SK-N-SH (cell line): ENCODE measurements at regions of chr13 and their contacts with region 1.

Region 1: GRCh38 chr13:98653463-98653985 is 76.6 kb upstream of the STK24 start:
- DNase-seq: peak; percentile 84
- H3K4me3 ChIP-seq: peak overlapping the region in 1 of 2 experiments; percentile 35; a peak in 1 of 4 replicates
- H3K27ac ChIP-seq: no peak overlapping the region
- H3K4me1 ChIP-seq: peaks cover 0 to 7% of the 10 kb centered on the region in 2 experiments; a peak in 2 of 4 replicates
- H3K27me3 ChIP-seq: no peaks in the 10 kb centered on the region
- CTCF ChIP-seq: peak; percentile 92
- EP300 ChIP-seq: 0 out of 4 replicates have a peak, but pooled peaks of 1 of the 2 experiments have one; percentile 31
- RAD21 ChIP-seq: peak; percentile 92

Region 2: DNA sequence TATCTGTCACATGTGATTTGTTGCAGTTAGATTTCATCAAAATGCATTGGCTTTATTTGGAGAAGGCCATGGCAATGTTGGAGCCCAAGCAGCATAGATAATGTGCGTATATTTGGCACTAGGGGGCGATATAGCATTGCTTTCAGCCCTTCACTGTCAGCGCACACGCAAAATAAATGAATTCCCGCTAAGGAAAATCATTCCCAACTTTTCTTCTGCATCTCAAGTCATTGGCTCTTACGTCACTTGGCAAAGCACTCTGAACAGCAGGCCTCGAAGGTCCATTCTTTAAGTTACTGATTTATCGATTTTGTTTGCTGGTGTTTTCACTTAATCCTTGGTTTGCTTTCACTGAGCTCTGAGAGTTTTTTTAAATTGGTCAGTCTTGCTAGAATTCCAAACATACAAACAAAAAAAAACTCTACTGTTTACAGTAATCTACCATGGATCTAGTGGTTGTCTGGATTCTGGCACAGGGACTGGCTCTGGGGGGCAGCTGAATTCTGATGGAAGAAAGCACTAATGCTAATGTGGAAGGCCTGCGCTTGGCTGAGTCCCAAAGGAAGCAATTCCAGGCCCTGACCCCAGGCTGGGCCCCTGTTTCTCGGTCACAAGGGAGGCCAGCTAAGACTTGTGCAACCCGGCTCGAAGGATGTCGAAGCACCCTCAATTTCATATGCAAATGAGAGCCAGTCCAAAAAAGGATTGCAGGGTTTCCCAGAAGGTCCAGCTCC is 797.8 kb before region 1 on chr13:
- CTCF ChIA-PET with region 1: interaction called, 12 read pairs
- POLR2A ChIA-PET with region 1: no interaction called
- DNase-seq: peak; percentile 62
- H3K4me3 ChIP-seq: no peak overlapping the region
- H3K27ac ChIP-seq: peak overlapping the region in 1 of 2 experiments; percentile 30; a peak in 1 of 4 replicates
- H3K4me1 ChIP-seq: peaks cover 3 to 17% of the 10 kb centered on the region in 2 experiments; a peak in 2 of 4 replicates
- H3K27me3 ChIP-seq: no peaks in the 10 kb centered on the region
- CTCF ChIP-seq: peak; percentile 92
- EP300 ChIP-seq: 0 out of 4 replicates have a peak, but pooled peaks of 1 of the 2 experiments have one; percentile 9
- RAD21 ChIP-seq: peak; percentile 98

Region 3: GRCh38 chr13:98466634-98467236 is 186.8 kb before region 1 on chr13:
- CTCF ChIA-PET with region 1: interaction called, 11 read pairs
- POLR2A ChIA-PET with region 1: no interaction called
- DNase-seq: peak; percentile 68
- H3K4me3 ChIP-seq: peak overlapping the region in 1 of 2 experiments; percentile 28; a peak in 1 of 4 replicates
- H3K27ac ChIP-seq: no peak overlapping the region
- H3K4me1 ChIP-seq: peaks cover 0 to 19% of the 10 kb centered on the region in 2 experiments; a peak in 1 of 4 replicates
- H3K27me3 ChIP-seq: no peaks in the 10 kb centered on the region
- CTCF ChIP-seq: peak; percentile 75
- EP300 ChIP-seq: no peak
- RAD21 ChIP-seq: peak; percentile 50

Region 4: DNA sequence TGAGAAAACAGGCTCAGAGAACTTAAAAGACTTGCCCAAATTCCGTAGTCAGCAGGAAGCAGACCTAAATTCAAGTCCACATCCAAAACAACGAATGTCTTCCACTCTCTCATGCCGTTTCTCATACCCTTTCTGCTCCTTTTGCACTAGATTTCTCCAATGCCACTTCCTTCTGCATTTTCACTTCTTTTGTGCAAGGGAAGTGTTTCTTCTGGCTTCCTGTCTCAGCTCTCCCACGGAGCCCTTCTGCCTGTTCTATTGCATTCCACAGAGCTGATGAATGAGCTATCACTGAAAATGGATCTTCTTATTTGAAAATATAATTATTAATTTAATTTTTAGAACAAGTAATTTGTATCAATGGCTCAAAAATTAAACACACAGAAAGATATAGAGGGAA is 20.6 kb before region 1 on chr13:
- CTCF ChIA-PET with region 1: interaction called, 19 read pairs
- POLR2A ChIA-PET with region 1: no interaction called
- DNase-seq: no peak
- H3K4me3 ChIP-seq: no peak overlapping the region
- H3K27ac ChIP-seq: no peak overlapping the region
- H3K4me1 ChIP-seq: no peaks in the 10 kb centered on the region
- H3K27me3 ChIP-seq: no peaks in the 10 kb centered on the region
- CTCF ChIP-seq: no peak
- EP300 ChIP-seq: no peak
- RAD21 ChIP-seq: no peak

Region 5: GRCh38 chr13:98672944-98673545 is 19.5 kb after region 1 on chr13:
- CTCF ChIA-PET with region 1: interaction called, 18 read pairs
- POLR2A ChIA-PET with region 1: no interaction called
- DNase-seq: peak; percentile 77
- H3K4me3 ChIP-seq: peak overlapping the region in 1 of 2 experiments; percentile 22; a peak in 1 of 4 replicates
- H3K27ac ChIP-seq: no peak overlapping the region
- H3K4me1 ChIP-seq: peaks cover 0 to 8% of the 10 kb centered on the region in 2 experiments; a peak in 1 of 4 replicates
- H3K27me3 ChIP-seq: no peaks in the 10 kb centered on the region; the same call in 1 of the 2 replicates
- CTCF ChIP-seq: peak; percentile 89
- EP300 ChIP-seq: no peak
- RAD21 ChIP-seq: peak; percentile 85

Region 6: GRCh38 chr13:98721825-98722510 is 68.4 kb after region 1 on chr13:
- CTCF ChIA-PET with region 1: no interaction called
- POLR2A ChIA-PET with region 1: no interaction called
- DNase-seq: no peak
- H3K4me3 ChIP-seq: no peak overlapping the region
- H3K27ac ChIP-seq: no peak overlapping the region
- H3K4me1 ChIP-seq: no peaks in the 10 kb centered on the region; a peak in 1 of 4 replicates
- H3K27me3 ChIP-seq: peaks cover 5% of the 10 kb centered on the region; the same call in 1 of the 2 replicates
- CTCF ChIP-seq: no peak
- EP300 ChIP-seq: no peak
- RAD21 ChIP-seq: no peak

Region 7: DNA sequence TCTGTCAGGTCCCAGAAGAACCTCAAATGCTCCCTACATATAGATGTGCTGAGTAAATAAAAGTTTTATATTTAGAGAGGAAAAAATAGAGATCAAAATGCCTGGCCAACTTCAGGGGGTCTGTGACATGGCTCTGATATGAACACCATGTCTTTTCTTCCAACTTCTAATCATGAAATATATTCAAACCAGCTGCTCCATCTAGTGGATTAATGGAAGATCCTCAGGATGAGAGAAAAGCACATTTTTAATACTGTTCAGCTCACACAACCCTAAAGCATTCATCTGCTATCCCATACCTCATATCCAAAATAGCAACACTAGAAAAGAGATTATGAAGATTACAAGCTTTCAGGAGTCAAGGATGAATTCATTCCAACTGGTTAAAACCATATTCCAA is 380.3 kb after region 1 on chr13:
- CTCF ChIA-PET with region 1: no interaction called
- POLR2A ChIA-PET with region 1: no interaction called
- DNase-seq: peak; percentile 34
- H3K4me3 ChIP-seq: no peak overlapping the region
- H3K27ac ChIP-seq: no peak overlapping the region
- H3K4me1 ChIP-seq: no peaks in the 10 kb centered on the region; a peak in 2 of 4 replicates
- H3K27me3 ChIP-seq: no peaks in the 10 kb centered on the region
- CTCF ChIP-seq: peak; percentile 73
- EP300 ChIP-seq: no peak
- RAD21 ChIP-seq: peak; percentile 80